Pancreas (tissue), 10 donors: ENCODE measurements at regions of chr1 and their contacts with region 1.

Region 1: GRCh38 chr1:212785871-212786270 is 5.7 kb downstream of the NSL1 start:
- DNase-seq: no peak
- ATAC-seq: no peak
- H3K4me3 ChIP-seq: no peak overlapping the region
- H3K27ac ChIP-seq: no peak overlapping the region
- H3K4me1 ChIP-seq: peaks cover 4 to 13% (median 8%) of the 10 kb centered on the region in 3 donors
- H3K27me3 ChIP-seq: no peaks in the 10 kb centered on the region
- CTCF ChIP-seq: no peak

Region 2: GRCh38 chr1:212665241-212666115 is 120.4 kb before region 1 on chr1:
- intact Hi-C with region 1: loop called in 1 of 3 experiments (anchors 5 kb)
- DNase-seq: peak; percentile 69 to 94 (median 82)
- ATAC-seq: peak; percentile 97 to 99 (median 98)
- H3K4me3 ChIP-seq: peak overlapping the region; percentile 27 to 55 (median 46)
- H3K27ac ChIP-seq: no peak overlapping the region
- H3K4me1 ChIP-seq: peaks cover 0 to 4% (median 0%) of the 10 kb centered on the region in 3 donors
- H3K27me3 ChIP-seq: no peaks in the 10 kb centered on the region
- CTCF ChIP-seq: peak; percentile 92 to 96 (median 94)